H1 (cell line): ENCODE measurements at regions of chr21 and their contacts with region 1.

Region 1: GRCh38 chr21:33386222-33386784 is 16.9 kb upstream of the IFNGR2 start:
- DNase-seq: no peak
- H3K4me3 ChIP-seq: no peak overlapping the region
- H3K27ac ChIP-seq: no peak overlapping the region
- H3K4me1 ChIP-seq: peaks cover 0 to 5% (median 2%) of the 10 kb centered on the region in 4 experiments; a peak in 1 of 7 replicates
- H3K27me3 ChIP-seq: no peaks in the 10 kb centered on the region; a peak in 1 of 7 replicates
- CTCF ChIP-seq: peak; percentile 54 to 74 (median 62)
- EP300 ChIP-seq: no peak
- POLR2A ChIP-seq: no peak
- RAD21 ChIP-seq: peak; percentile 17 to 46; a peak in 3 of 4 replicates

Region 2: GRCh38 chr21:33348706-33349105 is 37.6 kb before region 1 on chr21:
- CTCF ChIA-PET with region 1: interaction called, 21 read pairs
- POLR2A ChIA-PET with region 1: no interaction called
- DNase-seq: no peak
- H3K4me3 ChIP-seq: no peak overlapping the region
- H3K27ac ChIP-seq: no peak overlapping the region
- H3K4me1 ChIP-seq: no peaks in the 10 kb centered on the region
- H3K27me3 ChIP-seq: no peaks in the 10 kb centered on the region
- CTCF ChIP-seq: no peak
- EP300 ChIP-seq: no peak
- POLR2A ChIP-seq: no peak
- RAD21 ChIP-seq: no peak

Region 3: DNA sequence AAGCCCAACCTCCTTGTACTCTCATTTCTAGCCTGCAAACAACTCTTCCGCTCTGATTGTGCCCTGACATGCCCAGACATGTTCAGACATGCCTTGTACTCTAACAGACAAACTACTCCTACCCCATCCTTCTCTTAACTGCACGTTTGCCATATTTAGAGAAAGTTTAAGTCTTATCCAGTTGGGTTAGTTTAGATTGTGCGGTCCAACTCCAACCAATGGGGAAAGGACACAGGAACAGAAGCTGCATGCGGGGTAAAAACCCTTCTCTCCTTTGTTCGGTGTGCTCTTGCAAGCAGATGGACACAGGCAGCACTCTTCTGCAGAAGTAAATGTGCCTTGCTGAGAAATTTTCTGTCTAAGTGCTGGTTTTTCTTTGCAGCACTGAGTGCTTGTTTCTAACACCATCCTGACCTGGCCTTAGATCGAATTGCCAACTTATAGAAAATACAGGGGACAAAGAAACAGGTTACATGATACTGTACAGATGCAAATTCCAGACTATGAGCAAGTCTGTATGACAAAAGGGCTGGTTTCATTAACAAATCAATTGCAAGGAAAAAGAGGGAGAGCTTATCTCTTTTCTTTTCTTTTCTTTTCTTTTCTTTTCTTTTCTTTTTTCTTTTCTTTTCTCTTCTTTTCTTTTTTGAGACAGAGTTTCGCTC is 18.9 kb before region 1 on chr21:
- CTCF ChIA-PET with region 1: interaction called, 35 read pairs
- POLR2A ChIA-PET with region 1: interaction called, 9 read pairs
- DNase-seq: no peak
- H3K4me3 ChIP-seq: no peak overlapping the region
- H3K27ac ChIP-seq: peak overlapping the region; percentile 96
- H3K4me1 ChIP-seq: peaks cover 0 to 12% (median 2%) of the 10 kb centered on the region in 4 experiments; a peak in 3 of 7 replicates
- H3K27me3 ChIP-seq: no peaks in the 10 kb centered on the region
- CTCF ChIP-seq: no peak
- EP300 ChIP-seq: peak in 1 of 2 experiments; percentile 74; a peak in 1 of 3 replicates
- POLR2A ChIP-seq: peak; percentile 20 to 25; a peak in 2 of 3 replicates
- RAD21 ChIP-seq: no peak

Region 4: GRCh38 chr21:33374450-33375096 is 11.7 kb before region 1 on chr21:
- CTCF ChIA-PET with region 1: interaction called, 18 read pairs
- POLR2A ChIA-PET with region 1: no interaction called
- DNase-seq: no peak
- H3K4me3 ChIP-seq: no peak overlapping the region
- H3K27ac ChIP-seq: no peak overlapping the region
- H3K4me1 ChIP-seq: peaks cover 0 to 2% (median 0%) of the 10 kb centered on the region in 4 experiments; a peak in 1 of 7 replicates
- H3K27me3 ChIP-seq: no peaks in the 10 kb centered on the region
- CTCF ChIP-seq: peak; percentile 35 to 70 (median 58)
- EP300 ChIP-seq: no peak
- POLR2A ChIP-seq: no peak
- RAD21 ChIP-seq: peak; percentile 79 to 85

Region 5: GRCh38 chr21:33396947-33397346 is 10.6 kb after region 1 on chr21:
- CTCF ChIA-PET with region 1: interaction called, 28 read pairs
- POLR2A ChIA-PET with region 1: interaction called, 3 read pairs
- DNase-seq: no peak
- H3K4me3 ChIP-seq: no peak overlapping the region
- H3K27ac ChIP-seq: no peak overlapping the region
- H3K4me1 ChIP-seq: 0 out of 7 replicates have a peak, but pooled peaks cover 0 to 2% (median 0%) of the 10 kb centered on the region in 4 experiments
- H3K27me3 ChIP-seq: no peaks in the 10 kb centered on the region
- CTCF ChIP-seq: no peak
- EP300 ChIP-seq: no peak
- POLR2A ChIP-seq: no peak
- RAD21 ChIP-seq: no peak